ENCODE measurements at regions of chr7 and their contacts with region 1.

Region 1: DNA sequence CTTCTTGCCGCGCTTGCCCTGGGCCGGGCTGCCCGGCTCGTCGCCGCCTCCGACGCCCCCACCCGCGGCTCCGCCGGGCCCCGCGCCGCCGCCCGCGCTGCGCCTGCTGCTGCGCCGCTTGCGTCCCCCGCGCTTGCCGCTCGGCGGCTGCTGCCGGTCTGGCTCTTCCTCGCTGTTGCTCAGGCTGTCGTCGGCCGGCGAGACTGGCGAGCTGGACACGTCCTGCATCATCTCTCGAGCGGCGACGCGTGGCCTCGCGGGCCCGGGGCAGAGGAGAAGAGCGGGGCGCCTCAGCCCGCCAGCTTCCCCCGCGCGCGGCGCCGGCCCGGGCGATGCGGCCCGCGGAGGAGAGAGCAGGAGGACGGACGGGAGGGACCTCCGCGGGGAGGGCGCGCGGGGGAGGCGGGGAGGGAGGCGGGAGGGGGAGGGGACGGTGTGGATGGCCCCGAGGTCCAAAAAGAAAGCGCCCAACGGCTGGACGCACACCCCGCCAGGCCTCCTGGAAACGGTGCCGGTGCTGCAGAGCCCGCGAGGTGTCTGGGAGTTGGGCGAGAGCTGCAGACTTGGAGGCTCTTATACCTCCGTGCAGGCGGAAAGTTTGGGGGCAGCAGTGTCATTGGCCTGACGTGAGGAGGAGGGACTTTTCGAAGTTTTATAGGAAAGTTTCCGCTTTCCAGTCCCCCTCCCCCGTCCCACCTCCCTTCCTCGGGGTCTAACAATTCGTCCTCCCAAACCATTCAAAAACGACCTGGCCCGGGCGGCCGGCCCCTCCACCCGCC is at the start of gene TWIST1:
- DNase-seq: peak; percentile 86
- H3K4me3 ChIP-seq: peak within 1 kb of the TSS; percentile 94
- H3K27ac ChIP-seq: peak within 1 kb of the TSS; percentile 54
- H3K27me3 ChIP-seq: no peaks in the 10 kb centered on the region
- CTCF ChIP-seq: no peak
- polyA plus RNA-seq, gene TWIST1: 19.4 and 26.5 TPM in 2 replicates

Region 2: GRCh38 chr7:18590744-18591340 is 526.4 kb before region 1 on chr7:
- CTCF ChIA-PET with region 1: interaction called, 75 read pairs
- POLR2A ChIA-PET with region 1: no interaction called
- DNase-seq: no peak
- H3K4me3 ChIP-seq: no peak overlapping the region
- H3K27ac ChIP-seq: no peak overlapping the region
- H3K27me3 ChIP-seq: no peaks in the 10 kb centered on the region
- CTCF ChIP-seq: peak; percentile 75

Region 3: GRCh38 chr7:18693406-18693805 is 423.9 kb before region 1 on chr7:
- CTCF ChIA-PET with region 1: interaction called, 29 read pairs
- POLR2A ChIA-PET with region 1: no interaction called
- DNase-seq: peak; percentile 63
- H3K4me3 ChIP-seq: no peak overlapping the region
- H3K27ac ChIP-seq: no peak overlapping the region
- H3K27me3 ChIP-seq: no peaks in the 10 kb centered on the region
- CTCF ChIP-seq: peak; percentile 85

Region 4: GRCh38 chr7:19305698-19306097 is 188.4 kb after region 1 on chr7:
- CTCF ChIA-PET with region 1: interaction called, 14 read pairs
- POLR2A ChIA-PET with region 1: no interaction called
- DNase-seq: no peak
- H3K4me3 ChIP-seq: no peak overlapping the region
- H3K27ac ChIP-seq: no peak overlapping the region
- H3K27me3 ChIP-seq: no peaks in the 10 kb centered on the region
- CTCF ChIP-seq: no peak

Region 5: DNA sequence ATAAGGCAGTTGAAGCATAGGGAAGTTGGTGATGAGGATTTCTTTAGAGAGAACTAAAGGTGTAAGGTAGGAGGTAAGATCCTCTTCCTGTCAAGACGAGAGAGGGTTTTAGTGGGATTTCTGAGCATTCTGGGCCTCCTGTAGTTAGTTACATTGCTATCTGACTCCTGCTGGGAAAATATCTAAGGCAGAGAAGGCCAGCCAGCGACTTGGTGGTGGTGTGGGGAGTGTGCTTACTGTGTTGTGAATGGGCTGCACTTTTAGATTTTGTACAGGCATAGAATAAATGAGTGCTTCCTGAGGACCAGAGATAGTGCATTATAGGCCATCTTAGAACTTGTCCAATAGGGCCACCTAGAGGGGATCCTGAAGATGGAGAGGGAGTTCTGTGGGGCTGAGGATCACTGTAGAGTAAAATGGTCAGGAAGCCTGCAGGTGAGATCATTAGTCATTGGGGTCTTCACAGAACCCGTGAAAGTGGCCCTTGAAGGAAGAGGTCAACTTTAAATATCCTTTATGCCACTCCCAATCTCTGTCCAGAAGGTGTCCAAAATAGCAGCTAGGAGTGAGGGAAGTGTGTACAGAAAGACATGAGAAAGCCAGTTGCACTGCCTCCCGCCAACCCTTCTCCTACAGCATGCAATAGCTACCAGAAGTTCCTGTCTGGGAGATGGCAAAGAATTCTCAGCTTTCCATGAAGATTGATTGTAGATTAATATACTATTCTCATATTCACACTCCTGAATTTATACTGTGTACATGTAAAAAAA is 324.9 kb after region 1 on chr7:
- CTCF ChIA-PET with region 1: interaction called, 146 read pairs
- POLR2A ChIA-PET with region 1: no interaction called
- DNase-seq: peak; percentile 32
- H3K4me3 ChIP-seq: no peak overlapping the region
- H3K27ac ChIP-seq: no peak overlapping the region
- H3K27me3 ChIP-seq: no peaks in the 10 kb centered on the region
- CTCF ChIP-seq: peak; percentile 78

Measured in AG04450 (cell line).